B cell (primary cell): ENCODE measurements at regions of chr12 and their contacts with region 1.

Region 1: DNA sequence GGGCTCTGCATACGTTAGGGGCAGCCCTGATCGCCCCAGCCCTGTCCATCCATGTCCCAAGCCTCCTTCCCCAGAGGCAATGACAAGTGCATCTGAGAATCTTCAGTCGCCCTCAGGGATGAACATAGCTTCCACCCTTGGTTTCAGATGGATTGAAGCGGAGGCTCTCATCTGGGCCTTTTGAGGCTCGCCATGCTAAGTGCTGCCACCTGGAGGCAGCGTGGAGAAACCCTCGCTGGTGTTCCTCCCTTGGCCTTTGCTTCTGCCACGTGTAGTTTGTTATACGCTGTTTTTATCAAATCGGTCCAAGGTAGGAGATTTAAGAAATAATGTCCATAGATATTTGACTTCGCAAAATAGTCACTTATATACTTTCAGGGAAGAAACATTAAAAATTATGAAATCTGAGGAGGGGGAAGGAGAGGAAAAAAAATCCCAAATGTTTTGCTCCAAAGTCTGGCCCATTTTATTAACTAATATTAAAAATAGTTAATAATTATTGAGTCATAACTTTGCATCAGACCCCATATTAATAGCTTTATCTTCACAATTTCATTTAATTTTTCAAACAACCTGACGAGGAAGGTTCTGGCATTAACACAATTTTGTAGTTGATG is 28.8 kb upstream of the LRRC10 start:
- DNase-seq: peak; percentile 69
- ATAC-seq: peak; percentile 67
- H3K4me3 ChIP-seq: no peak overlapping the region
- H3K4me3 Mint-ChIP-seq: no peak overlapping the region
- H3K27ac ChIP-seq: no peak overlapping the region
- H3K27ac Mint-ChIP-seq: no peak overlapping the region
- H3K4me1 ChIP-seq: no peaks in the 10 kb centered on the region
- H3K4me1 Mint-ChIP-seq: no peaks in the 10 kb centered on the region
- H3K27me3 ChIP-seq: no peaks in the 10 kb centered on the region
- H3K27me3 Mint-ChIP-seq: no peaks in the 10 kb centered on the region
- CTCF ChIP-seq: peak; percentile 91

Region 2: DNA sequence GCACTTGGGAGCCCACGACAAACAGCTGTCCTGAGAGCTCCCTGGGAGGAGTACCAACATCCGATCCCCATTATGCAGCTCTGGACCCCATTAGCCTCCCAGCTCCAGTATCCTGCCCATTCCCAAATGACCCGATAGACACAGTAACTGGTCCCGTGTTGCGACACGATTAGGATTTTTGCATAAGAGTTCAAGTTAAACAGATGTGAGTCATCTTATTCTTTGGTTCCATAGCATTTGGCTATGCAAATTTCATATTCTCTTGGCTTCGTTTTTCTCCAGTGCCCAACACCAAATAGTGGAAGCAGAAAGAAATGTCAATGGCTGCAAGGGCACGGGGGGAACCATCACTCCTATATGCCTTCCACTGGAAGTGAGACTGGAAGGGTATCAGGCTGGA is 14.2 kb after region 1 on chr12:
- CTCF ChIA-PET with region 1: interaction called, 17 read pairs
- POLR2A ChIA-PET with region 1: no interaction called
- intact Hi-C with region 1: no loop called
- DNase-seq: no peak
- ATAC-seq: no peak
- H3K4me3 ChIP-seq: no peak overlapping the region
- H3K4me3 Mint-ChIP-seq: no peak overlapping the region
- H3K27ac ChIP-seq: no peak overlapping the region
- H3K27ac Mint-ChIP-seq: no peak overlapping the region
- H3K4me1 ChIP-seq: no peaks in the 10 kb centered on the region
- H3K4me1 Mint-ChIP-seq: no peaks in the 10 kb centered on the region
- H3K27me3 ChIP-seq: peaks cover 0 to 2% (median 0%) of the 10 kb centered on the region in 4 experiments
- H3K27me3 Mint-ChIP-seq: peaks cover 23% of the 10 kb centered on the region
- CTCF ChIP-seq: no peak